Activated naive CD4-positive, alpha-beta T cell treated with anti-CD3 and anti-CD28 coated beads for 36 hours (primary cell): ENCODE measurements at regions of chr6 and their contacts with region 1.

Region 1: DNA sequence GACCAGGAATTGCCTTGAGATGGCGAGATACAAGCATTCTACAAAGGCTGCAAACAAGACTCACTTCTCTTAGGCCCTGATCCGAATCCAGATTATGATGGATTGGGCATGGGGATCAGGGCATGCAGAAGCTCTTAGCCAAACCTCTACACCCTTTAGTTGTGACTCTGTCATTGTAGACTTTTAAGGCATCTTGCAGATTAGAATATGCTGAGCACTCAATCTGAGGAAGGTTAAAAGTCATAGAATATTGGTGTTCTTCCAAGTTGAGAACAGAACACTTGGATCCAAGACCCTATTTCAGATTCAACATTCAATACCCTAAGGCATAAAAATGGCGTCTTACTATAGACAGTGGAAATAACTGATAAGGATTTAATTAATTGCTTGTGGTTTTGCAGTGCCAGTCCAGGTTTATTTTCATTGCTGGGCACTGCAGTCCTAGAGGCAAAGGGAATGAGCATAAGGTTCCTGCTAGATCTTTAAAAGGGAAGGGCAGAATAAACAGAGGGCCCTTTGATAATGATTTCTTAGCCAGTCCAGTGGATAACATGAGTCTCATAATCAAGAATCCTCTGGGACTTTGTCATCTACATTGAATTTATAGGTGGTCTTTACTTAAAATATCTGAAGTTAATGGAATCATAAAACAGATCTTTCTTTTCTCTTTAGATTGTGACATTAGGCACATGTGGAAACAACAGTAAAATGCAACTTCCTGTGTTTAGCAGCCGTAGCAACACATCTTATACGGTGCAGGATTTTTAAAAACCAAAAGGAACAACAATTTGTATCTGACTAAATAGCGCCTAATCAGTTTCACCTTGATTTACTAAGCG is 17.6 kb downstream of the PHACTR2 start:
- DNase-seq: no peak
- H3K4me3 Mint-ChIP-seq: no peak overlapping the region
- H3K27ac Mint-ChIP-seq: no peak overlapping the region
- H3K4me1 Mint-ChIP-seq: peaks cover 35% of the 10 kb centered on the region
- H3K27me3 Mint-ChIP-seq: no peaks in the 10 kb centered on the region

Region 2: GRCh38 chr6:143677891-143678791 is 17.2 kb before region 1 on chr6 and contains the start of gene PHACTR2:
- CTCF ChIA-PET with region 1: no interaction called
- intact Hi-C with region 1: loop called (anchors 1 kb)
- DNase-seq: peak; percentile 78
- H3K4me3 Mint-ChIP-seq: peak within 1 kb of the TSS; percentile 80
- H3K27ac Mint-ChIP-seq: peak within 1 kb of the TSS; percentile 36
- H3K4me1 Mint-ChIP-seq: peaks cover 12% of the 10 kb centered on the region
- H3K27me3 Mint-ChIP-seq: peaks cover 7% of the 10 kb centered on the region
- total RNA-seq, gene PHACTR2: 10.7 to 12.2 TPM

Region 3: GRCh38 chr6:143727035-143727434 is 31.7 kb after region 1 on chr6:
- CTCF ChIA-PET with region 1: no interaction called
- intact Hi-C with region 1: loop called (anchors 2 kb)
- DNase-seq: peak; percentile 6
- H3K4me3 Mint-ChIP-seq: no peak overlapping the region
- H3K27ac Mint-ChIP-seq: no peak overlapping the region
- H3K4me1 Mint-ChIP-seq: peaks cover 17% of the 10 kb centered on the region
- H3K27me3 Mint-ChIP-seq: no peaks in the 10 kb centered on the region

Region 4: DNA sequence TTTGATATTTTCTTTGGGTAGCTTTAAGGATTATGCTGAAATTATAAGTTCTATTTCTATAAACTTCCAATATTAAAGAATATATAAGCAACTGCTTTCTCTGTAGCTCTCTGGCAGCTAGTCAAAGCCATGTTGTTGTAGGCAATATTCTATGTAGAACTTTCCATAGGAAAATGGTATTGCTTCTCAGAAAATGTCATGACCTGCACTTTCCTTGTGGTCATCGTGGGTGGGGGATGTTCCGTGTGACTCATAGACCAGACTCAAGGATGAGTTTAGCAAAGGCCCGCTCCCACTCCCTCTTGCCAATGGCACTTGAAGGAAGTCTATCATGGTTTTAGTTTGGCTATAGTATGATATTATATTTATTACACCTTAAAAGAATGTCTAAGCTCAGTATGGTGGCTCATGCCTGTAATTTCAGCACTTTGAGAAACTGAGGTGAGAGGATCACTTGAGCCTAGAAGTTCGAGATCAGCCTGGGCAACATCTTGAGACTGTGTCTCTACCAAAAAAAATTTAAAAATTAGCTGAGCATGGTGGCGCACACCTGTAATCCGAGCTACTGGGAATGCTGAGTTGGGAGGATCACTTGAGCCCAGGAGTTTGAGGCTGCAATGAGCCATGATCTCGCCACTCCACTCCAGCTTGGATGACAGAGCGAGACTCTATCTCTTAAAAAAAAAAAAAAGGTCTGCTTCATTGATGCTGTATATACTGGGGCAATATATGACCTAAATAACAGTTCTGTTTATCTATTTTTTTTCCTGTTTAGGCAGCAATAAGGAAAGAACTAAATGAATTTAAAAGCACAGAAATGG is 111.1 kb after region 1 on chr6:
- CTCF ChIA-PET with region 1: no interaction called
- intact Hi-C with region 1: loop called (anchors 1 kb)
- DNase-seq: peak; percentile 83
- H3K4me3 Mint-ChIP-seq: no peak overlapping the region
- H3K27ac Mint-ChIP-seq: peak overlapping the region; percentile 62
- H3K4me1 Mint-ChIP-seq: peaks cover 39% of the 10 kb centered on the region
- H3K27me3 Mint-ChIP-seq: no peaks in the 10 kb centered on the region

Region 5: DNA sequence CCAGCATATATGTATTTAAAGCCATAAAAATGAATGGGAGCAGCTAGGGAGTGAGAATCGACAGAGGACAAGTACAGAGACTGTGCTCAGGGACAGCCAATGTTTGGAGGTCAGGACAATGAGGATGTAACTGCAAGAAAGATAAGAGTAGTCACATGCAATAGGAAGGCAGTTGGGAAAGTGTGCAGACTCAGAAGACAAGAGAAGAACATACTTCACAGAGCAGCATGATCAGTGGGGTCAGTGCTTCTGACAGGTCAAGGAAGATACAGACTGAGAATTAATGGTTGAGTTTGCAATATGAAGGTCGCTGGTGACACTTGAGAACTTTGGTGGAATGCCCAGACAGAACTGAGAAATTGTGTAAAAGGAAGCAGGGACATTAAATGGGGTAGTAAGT is 287.6 kb after region 1 on chr6:
- CTCF ChIA-PET with region 1: no interaction called
- intact Hi-C with region 1: no loop called
- DNase-seq: no peak
- H3K4me3 Mint-ChIP-seq: no peak overlapping the region
- H3K27ac Mint-ChIP-seq: no peak overlapping the region
- H3K4me1 Mint-ChIP-seq: no peaks in the 10 kb centered on the region
- H3K27me3 Mint-ChIP-seq: no peaks in the 10 kb centered on the region

Region 6: GRCh38 chr6:145309842-145310535 is 1614.6 kb after region 1 on chr6:
- CTCF ChIA-PET with region 1: no interaction called
- intact Hi-C with region 1: no loop called
- DNase-seq: no peak
- H3K4me3 Mint-ChIP-seq: no peak overlapping the region
- H3K27ac Mint-ChIP-seq: no peak overlapping the region
- H3K4me1 Mint-ChIP-seq: no peaks in the 10 kb centered on the region
- H3K27me3 Mint-ChIP-seq: no peaks in the 10 kb centered on the region